Transverse colon (tissue), 4 donors: ENCODE measurements at regions of chr19 and their contacts with region 1.

Region 1: GRCh38 chr19:5006201-5006600 is 37.3 kb downstream of the KDM4B start:
- DNase-seq: no peak
- H3K4me3 ChIP-seq: no peak overlapping the region
- H3K27ac ChIP-seq: no peak overlapping the region
- H3K4me1 ChIP-seq: peaks cover 0 to 14% (median 10%) of the 10 kb centered on the region in 4 donors
- H3K27me3 ChIP-seq: no peaks in the 10 kb centered on the region
- CTCF ChIP-seq: no peak
- EP300 ChIP-seq: no peak
- POLR2A ChIP-seq: no peak

Region 2: GRCh38 chr19:4976401-4977298 is 29.6 kb before region 1 on chr19:
- in situ Hi-C with region 1: no loop called
- intact Hi-C with region 1: loop called (anchors 1 kb)
- DNase-seq: peak; percentile 66
- H3K4me3 ChIP-seq: no peak overlapping the region
- H3K27ac ChIP-seq: peak overlapping the region; percentile 78 to 86 (median 80)
- H3K4me1 ChIP-seq: peaks cover 20 to 67% (median 50%) of the 10 kb centered on the region in 4 donors
- H3K27me3 ChIP-seq: no peaks in the 10 kb centered on the region
- CTCF ChIP-seq: peak in 3 of 5 experiments; percentile 24 to 37 (median 35)
- EP300 ChIP-seq: peak; percentile 88
- POLR2A ChIP-seq: peak; percentile 29